Mammary epithelial cell (primary cell): ENCODE measurements at regions of chr6 and their contacts with region 1.

Region 1: DNA sequence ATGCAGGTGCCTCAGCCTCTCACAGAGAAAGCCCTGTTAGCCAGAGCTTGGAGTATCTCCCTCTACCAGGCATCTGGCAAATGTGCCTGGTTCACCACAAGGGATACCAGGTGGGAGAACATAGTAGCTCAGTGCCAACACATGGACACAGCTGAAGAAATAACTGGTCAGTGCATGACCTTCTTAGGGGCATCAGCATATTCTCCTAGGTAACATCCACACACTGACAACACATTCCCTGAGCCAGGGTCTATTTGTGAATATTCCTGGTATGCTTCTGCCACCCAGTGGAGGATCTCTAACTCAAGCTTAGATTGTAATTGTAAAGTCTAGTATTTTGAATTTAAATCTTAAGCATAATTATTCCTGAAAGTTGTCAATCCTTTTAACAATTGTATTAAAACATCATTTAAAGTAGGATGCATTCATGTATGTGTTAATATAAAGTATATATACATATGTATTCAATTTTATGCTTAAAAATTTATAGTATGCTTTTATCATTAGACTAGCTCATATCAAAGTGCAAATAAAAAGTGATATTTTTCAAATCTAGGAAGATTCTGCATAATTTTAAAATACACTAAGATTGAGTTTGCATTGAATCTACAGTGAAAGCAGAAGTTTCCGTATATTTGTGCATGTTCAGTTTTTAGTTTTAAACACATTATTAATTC is 45.3 kb upstream of the COL21A1 start:
- DNase-seq: peak; percentile 41
- H3K4me3 ChIP-seq: no peak overlapping the region
- H3K27ac ChIP-seq: no peak overlapping the region
- H3K4me1 ChIP-seq: peaks cover 5% of the 10 kb centered on the region
- H3K27me3 ChIP-seq: no peaks in the 10 kb centered on the region
- CTCF ChIP-seq: peak; percentile 51 to 69

Region 2: GRCh38 chr6:55601120-55601519 is 691.5 kb before region 1 on chr6:
- CTCF ChIA-PET with region 1: no interaction called
- dilution Hi-C with region 1: no loop called
- in situ Hi-C with region 1: no loop called
- intact Hi-C with region 1: no loop called
- DNase-seq: no peak
- H3K4me3 ChIP-seq: no peak overlapping the region
- H3K27ac ChIP-seq: no peak overlapping the region
- H3K4me1 ChIP-seq: no peaks in the 10 kb centered on the region
- H3K27me3 ChIP-seq: no peaks in the 10 kb centered on the region
- CTCF ChIP-seq: no peak

Region 3: GRCh38 chr6:55866108-55866507 is 426.5 kb before region 1 on chr6:
- CTCF ChIA-PET with region 1: no interaction called
- dilution Hi-C with region 1: no loop called
- in situ Hi-C with region 1: no loop called
- intact Hi-C with region 1: no loop called
- DNase-seq: peak; percentile 76
- H3K4me3 ChIP-seq: no peak overlapping the region
- H3K27ac ChIP-seq: no peak overlapping the region
- H3K4me1 ChIP-seq: peaks cover 35% of the 10 kb centered on the region
- H3K27me3 ChIP-seq: no peaks in the 10 kb centered on the region
- CTCF ChIP-seq: no peak

Region 4: GRCh38 chr6:55974688-55975087 is 318.0 kb before region 1 on chr6:
- CTCF ChIA-PET with region 1: interaction called, 3 read pairs
- dilution Hi-C with region 1: loop called (anchors 5 kb)
- in situ Hi-C with region 1: no loop called
- intact Hi-C with region 1: no loop called
- DNase-seq: no peak
- H3K4me3 ChIP-seq: no peak overlapping the region
- H3K27ac ChIP-seq: no peak overlapping the region
- H3K4me1 ChIP-seq: no peaks in the 10 kb centered on the region
- H3K27me3 ChIP-seq: no peaks in the 10 kb centered on the region
- CTCF ChIP-seq: no peak

Region 5: DNA sequence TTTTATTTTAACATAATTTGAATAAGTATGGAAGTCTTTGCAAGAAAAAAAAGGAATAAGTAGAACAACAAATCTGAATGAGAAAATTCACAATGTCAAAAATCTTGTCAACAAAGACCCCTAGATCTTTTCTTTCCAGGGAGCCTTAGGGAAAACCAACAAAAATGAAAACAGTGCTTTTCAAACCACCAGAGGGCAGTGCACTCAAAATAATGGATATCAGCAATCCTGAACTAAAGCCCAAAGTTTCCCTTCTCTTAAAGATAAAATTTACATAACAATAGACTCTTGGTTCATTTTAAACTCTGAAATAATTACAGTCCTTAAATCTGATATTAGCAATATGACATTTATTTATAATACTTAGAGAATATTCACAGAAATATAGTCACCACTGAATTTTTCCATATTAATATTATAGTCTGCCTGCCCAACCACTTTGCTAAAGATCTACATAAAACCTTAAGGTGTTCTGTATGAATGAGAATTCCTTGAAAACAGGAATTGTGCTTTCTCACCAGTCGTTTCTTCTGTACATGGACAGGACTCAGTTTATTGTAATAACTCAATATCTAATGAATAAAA is 311.9 kb before region 1 on chr6:
- CTCF ChIA-PET with region 1: interaction called, 14 read pairs
- dilution Hi-C with region 1: loop called (anchors 5 kb)
- in situ Hi-C with region 1: loop called (anchors 5 kb)
- intact Hi-C with region 1: loop called (anchors 1 kb)
- DNase-seq: peak; percentile 8
- H3K4me3 ChIP-seq: no peak overlapping the region
- H3K27ac ChIP-seq: no peak overlapping the region
- H3K4me1 ChIP-seq: no peaks in the 10 kb centered on the region
- H3K27me3 ChIP-seq: peaks cover 2% of the 10 kb centered on the region
- CTCF ChIP-seq: peak; percentile 42 to 65

Region 6: GRCh38 chr6:56437171-56437900 is 144.7 kb after region 1 on chr6:
- CTCF ChIA-PET with region 1: no interaction called
- dilution Hi-C with region 1: no loop called
- in situ Hi-C with region 1: no loop called
- intact Hi-C with region 1: no loop called
- DNase-seq: peak; percentile 71
- H3K4me3 ChIP-seq: no peak overlapping the region
- H3K27ac ChIP-seq: no peak overlapping the region
- H3K4me1 ChIP-seq: peaks cover 31% of the 10 kb centered on the region
- H3K27me3 ChIP-seq: no peaks in the 10 kb centered on the region
- CTCF ChIP-seq: no peak